ENCODE measurements at regions of chr3 and their contacts with region 1.

Region 1: DNA sequence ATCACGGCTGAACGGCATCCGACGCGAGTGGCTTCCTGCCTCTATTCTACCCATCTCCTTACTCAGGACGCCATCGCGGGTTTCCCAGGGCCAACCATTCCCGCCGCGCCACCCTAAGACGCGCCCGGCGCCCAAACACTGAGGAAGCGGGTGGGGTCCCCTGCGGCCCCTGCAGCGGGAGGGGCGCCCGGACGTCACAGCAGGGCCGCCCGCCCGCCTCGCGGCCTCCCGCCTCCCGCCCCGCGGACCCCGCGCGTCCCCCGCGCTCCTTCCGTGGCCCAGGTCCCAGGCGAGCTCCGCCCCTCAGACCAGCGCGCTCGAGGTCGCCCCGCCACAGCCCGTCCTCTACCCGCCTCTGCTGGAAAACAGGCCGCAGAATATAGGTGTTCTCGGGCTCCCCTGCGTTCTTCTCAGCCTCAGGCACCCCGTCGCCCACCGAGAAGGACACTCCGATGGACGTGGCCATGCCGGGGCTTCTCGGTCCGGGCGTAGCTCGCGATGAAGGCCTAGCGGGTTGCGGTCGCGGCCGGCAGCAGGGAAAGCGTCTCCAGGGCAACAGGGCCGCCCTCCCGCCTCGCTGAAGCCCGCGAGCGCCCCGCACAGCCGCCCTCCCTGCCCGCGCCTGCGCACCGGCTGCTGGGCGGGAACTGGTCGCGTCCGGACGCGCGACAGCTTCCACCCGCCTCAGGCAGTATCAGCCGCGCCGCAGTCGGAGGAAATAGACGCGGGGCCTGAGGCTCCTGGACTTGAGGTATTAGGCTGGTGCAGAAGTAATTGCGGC is at the start of gene DYNLT2B:
- DNase-seq: peak; percentile 93
- ATAC-seq: peak; percentile 92
- H3K4me3 Mint-ChIP-seq: peak within 1 kb of the TSS; percentile 91
- H3K27ac Mint-ChIP-seq: peak within 1 kb of the TSS; percentile 95
- H3K4me1 Mint-ChIP-seq: peaks cover 12% of the 10 kb centered on the region
- H3K27me3 Mint-ChIP-seq: no peaks in the 10 kb centered on the region
- total RNA-seq, gene DYNLT2B: 7.3 to 16.3 TPM

Region 2: DNA sequence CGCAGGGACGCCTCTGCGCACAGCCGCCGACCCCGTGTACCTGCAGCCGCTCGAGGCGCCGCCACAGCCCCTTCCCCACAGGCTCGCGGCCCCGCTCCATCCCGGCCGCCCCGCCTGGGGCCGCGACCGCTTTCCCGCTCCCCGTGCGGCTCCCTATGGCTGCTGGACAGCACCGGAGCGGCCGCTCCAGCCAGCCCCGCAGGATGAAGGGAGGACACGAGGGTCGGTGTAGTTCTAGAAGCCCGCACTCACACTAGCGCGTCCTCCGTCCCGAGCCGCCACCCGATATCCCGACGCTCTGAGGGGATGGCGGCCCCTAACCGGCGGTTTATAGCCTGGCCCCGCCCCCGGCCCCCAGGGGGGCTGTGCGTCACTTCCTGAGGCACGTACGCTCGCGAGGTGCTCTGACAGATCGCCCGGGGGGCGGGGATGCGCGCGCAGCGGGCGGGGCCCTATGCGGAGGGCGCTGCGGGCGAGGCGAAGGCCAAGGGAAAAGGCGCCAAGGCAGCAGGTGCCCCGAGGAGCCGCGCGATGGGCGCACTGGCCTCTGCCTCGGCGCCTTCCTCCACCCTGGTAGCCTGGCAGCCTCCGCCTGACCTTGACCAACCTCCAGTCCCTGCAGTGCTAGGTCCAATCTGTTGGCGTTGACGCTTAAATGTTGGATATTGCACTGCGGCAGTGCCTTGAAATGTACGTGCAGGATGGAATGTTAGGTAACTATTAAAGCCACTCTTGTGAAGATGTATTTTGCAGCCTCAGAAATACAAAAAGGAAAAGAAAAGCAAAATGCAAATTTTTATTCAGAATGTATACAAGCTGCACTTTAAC is 235.9 kb before region 1 on chr3 and contains the start of gene TFRC:
- CTCF ChIA-PET with region 1: no interaction called
- POLR2A ChIA-PET with region 1: no interaction called
- intact Hi-C with region 1: loop called in 1 of 2 experiments (anchors 2 kb)
- DNase-seq: peak; percentile 98
- ATAC-seq: peak; percentile 92
- H3K4me3 Mint-ChIP-seq: peak within 1 kb of the TSS; percentile 95
- H3K27ac Mint-ChIP-seq: peak within 1 kb of the TSS; percentile 93
- H3K4me1 Mint-ChIP-seq: peaks cover 30% of the 10 kb centered on the region
- H3K27me3 Mint-ChIP-seq: no peaks in the 10 kb centered on the region
- total RNA-seq, gene TFRC: 373 to 520 TPM

Region 3: GRCh38 chr3:196251918-196252317 is 66.0 kb before region 1 on chr3:
- CTCF ChIA-PET with region 1: interaction called, 3 read pairs
- POLR2A ChIA-PET with region 1: no interaction called
- intact Hi-C with region 1: loop called (anchors 1 to 2 kb)
- DNase-seq: no peak
- ATAC-seq: no peak
- H3K4me3 Mint-ChIP-seq: no peak overlapping the region
- H3K27ac Mint-ChIP-seq: no peak overlapping the region
- H3K4me1 Mint-ChIP-seq: no peaks in the 10 kb centered on the region
- H3K27me3 Mint-ChIP-seq: no peaks in the 10 kb centered on the region

Region 4: GRCh38 chr3:196274585-196274984 is 43.3 kb before region 1 on chr3:
- CTCF ChIA-PET with region 1: interaction called, 3 read pairs
- POLR2A ChIA-PET with region 1: no interaction called
- intact Hi-C with region 1: loop called (anchors 1 to 5 kb)
- DNase-seq: peak; percentile 79
- ATAC-seq: peak; percentile 84
- H3K4me3 Mint-ChIP-seq: peak overlapping the region; percentile 56
- H3K27ac Mint-ChIP-seq: peak overlapping the region; percentile 95
- H3K4me1 Mint-ChIP-seq: peaks cover 65% of the 10 kb centered on the region
- H3K27me3 Mint-ChIP-seq: no peaks in the 10 kb centered on the region

Region 5: DNA sequence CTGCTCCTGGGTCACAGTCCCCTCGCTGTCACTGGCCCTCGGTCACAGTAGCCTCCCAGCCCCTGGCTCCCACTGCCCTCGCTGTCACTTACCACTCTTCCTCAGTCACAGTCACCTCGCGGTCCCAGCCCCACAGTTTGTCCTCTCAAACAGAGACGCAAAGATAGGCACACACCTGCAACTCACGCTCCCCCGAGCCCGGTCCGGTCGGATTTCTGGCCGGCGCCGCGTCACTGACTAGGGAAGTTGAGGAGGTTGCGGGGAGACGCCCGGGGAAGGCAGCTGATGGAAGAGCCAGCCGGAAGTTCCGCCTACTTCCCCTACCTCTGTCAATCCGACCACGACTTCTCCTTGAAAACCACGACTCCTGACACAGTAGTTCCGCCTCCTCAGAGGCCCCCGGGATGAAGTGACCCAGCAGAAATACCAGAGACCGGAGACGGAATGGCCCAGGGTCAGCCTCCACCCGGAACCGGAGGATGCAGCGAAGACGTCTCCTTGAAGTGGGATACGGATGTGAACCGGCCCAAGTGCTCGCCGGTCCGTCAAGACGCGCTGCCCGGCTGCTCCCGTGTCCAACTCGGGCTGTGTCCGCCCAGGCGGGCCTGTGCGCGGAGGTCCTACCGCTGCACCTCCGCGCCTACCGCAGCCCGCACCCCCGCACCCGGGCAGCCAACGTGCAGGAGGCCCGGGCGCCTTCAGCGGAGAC is 30.3 kb before region 1 on chr3 and contains the start of gene PCYT1A:
- CTCF ChIA-PET with region 1: no interaction called
- POLR2A ChIA-PET with region 1: no interaction called
- intact Hi-C with region 1: loop called in 1 of 2 experiments (anchors 1 kb)
- DNase-seq: peak; percentile 86
- ATAC-seq: peak; percentile 90
- H3K4me3 Mint-ChIP-seq: peak within 1 kb of the TSS; percentile 98
- H3K27ac Mint-ChIP-seq: peak within 1 kb of the TSS; percentile 97
- H3K4me1 Mint-ChIP-seq: peaks cover 34% of the 10 kb centered on the region
- H3K27me3 Mint-ChIP-seq: no peaks in the 10 kb centered on the region
- total RNA-seq, gene PCYT1A: 41.8 to 47.1 TPM

Region 6: GRCh38 chr3:196298521-196298920 is 19.4 kb before region 1 on chr3:
- CTCF ChIA-PET with region 1: no interaction called
- POLR2A ChIA-PET with region 1: no interaction called
- intact Hi-C with region 1: loop called in 1 of 2 experiments (anchors 1 kb)
- DNase-seq: no peak
- ATAC-seq: no peak
- H3K4me3 Mint-ChIP-seq: no peak overlapping the region
- H3K27ac Mint-ChIP-seq: no peak overlapping the region
- H3K4me1 Mint-ChIP-seq: no peaks in the 10 kb centered on the region
- H3K27me3 Mint-ChIP-seq: no peaks in the 10 kb centered on the region